Aorta (tissue), 5 donors: ENCODE measurements at regions of chr19 and their contacts with region 1.

Region 1: DNA sequence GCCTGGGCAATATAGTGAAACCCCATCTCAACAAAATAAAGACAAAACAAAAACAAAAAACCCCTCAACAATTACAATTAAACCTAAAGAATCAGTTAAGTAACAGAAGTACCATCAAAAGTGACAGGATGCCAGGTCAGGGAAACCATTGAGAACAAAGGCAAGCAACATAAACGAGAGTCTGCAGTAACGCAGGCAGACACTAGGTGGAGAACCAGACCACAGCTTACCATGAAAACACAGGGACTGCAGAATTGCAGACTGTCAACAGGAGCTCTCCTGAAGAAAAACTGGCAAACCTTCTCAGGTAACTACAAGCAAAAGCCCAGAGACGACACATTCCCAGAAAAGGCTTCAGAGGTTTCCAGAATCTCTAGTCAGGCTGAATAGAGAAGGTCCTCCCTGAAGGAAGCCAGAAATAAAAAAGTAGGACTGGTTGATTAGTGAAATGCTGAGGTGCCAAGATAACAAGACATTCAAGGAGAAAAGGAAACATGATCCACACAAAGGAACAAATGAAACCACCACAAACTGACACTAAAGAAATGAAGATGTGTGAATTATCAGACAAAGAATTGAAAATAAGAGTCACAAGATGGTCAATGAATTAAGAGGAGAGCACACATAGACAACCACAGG is 2.2 kb upstream of the ZNF665 start:
- DNase-seq: peak; percentile 80
- ATAC-seq: peak; percentile 82
- H3K4me3 ChIP-seq: no peak overlapping the region
- H3K27ac ChIP-seq: no peak overlapping the region
- H3K4me1 ChIP-seq: no peaks in the 10 kb centered on the region
- H3K27me3 ChIP-seq: no peaks in the 10 kb centered on the region

Region 2: GRCh38 chr19:53103198-53103944 is 92.0 kb before region 1 on chr19 and contains the start of gene ZNF160:
- intact Hi-C with region 1: loop called in 1 of 2 experiments (anchors 5 kb)
- DNase-seq: peak; percentile 100
- ATAC-seq: peak; percentile 100
- H3K4me3 ChIP-seq: peak within 1 kb of the TSS; percentile 61 to 78
- H3K27ac ChIP-seq: peak within 1 kb of the TSS; percentile 49 to 72
- H3K4me1 ChIP-seq: no peaks in the 10 kb centered on the region
- H3K27me3 ChIP-seq: no peaks in the 10 kb centered on the region
- total RNA-seq, gene ZNF160: 32.5 to 61.0 TPM

Region 3: GRCh38 chr19:53333463-53334449 is 138.4 kb after region 1 on chr19 and contains the start of gene ZNF845:
- intact Hi-C with region 1: loop called (anchors 10 kb)
- DNase-seq: peak; percentile 97 to 98
- ATAC-seq: peak; percentile 100
- H3K4me3 ChIP-seq: peak within 1 kb of the TSS; percentile 76 to 86
- H3K27ac ChIP-seq: peak within 1 kb of the TSS; percentile 11 to 69
- H3K4me1 ChIP-seq: no peaks in the 10 kb centered on the region
- H3K27me3 ChIP-seq: no peaks in the 10 kb centered on the region
- total RNA-seq, gene ZNF845: 7.3 to 7.5 TPM

Region 4: GRCh38 chr19:53431399-53432087 is 236.2 kb after region 1 on chr19 and contains the start of gene ZNF761:
- intact Hi-C with region 1: loop called in 1 of 2 experiments (anchors 5 kb)
- DNase-seq: peak; percentile 96 to 99
- ATAC-seq: peak; percentile 100
- H3K4me3 ChIP-seq: peak within 1 kb of the TSS; percentile 57 to 78
- H3K27ac ChIP-seq: peak within 1 kb of the TSS in 1 of 2 donors; percentile 31
- H3K4me1 ChIP-seq: no peaks in the 10 kb centered on the region
- H3K27me3 ChIP-seq: no peaks in the 10 kb centered on the region
- total RNA-seq, gene ZNF761: 9.5 to 10.2 TPM

Region 5: DNA sequence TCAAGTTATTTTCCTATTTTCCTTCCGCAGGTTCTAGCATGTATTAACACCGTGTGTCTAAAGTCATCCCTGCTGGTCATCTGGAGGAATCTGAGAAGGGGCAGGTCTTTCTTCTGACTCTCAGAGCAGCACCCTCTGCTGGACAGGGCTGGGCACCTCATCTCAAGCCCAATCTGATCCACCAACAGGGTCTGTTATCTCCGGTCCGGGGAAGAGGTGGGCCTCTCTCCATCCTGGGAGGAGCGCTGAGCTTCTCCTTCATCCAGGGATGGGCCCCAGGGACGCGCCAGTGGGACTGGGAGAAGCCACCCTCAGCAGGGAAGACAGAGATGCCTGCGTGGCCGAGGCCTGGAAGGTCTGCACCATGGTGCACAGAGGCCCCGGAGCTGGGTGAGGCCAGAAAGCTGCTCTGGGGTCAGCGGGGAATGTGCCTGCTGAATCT is 316.6 kb after region 1 on chr19:
- intact Hi-C with region 1: loop called (anchors 5 to 10 kb)
- DNase-seq: peak; percentile 65 to 82
- ATAC-seq: peak; percentile 83
- H3K4me3 ChIP-seq: no peak overlapping the region
- H3K27ac ChIP-seq: no peak overlapping the region
- H3K4me1 ChIP-seq: no peaks in the 10 kb centered on the region
- H3K27me3 ChIP-seq: no peaks in the 10 kb centered on the region